ENCODE measurements at regions of chr5 and their contacts with region 1.

Region 1: DNA sequence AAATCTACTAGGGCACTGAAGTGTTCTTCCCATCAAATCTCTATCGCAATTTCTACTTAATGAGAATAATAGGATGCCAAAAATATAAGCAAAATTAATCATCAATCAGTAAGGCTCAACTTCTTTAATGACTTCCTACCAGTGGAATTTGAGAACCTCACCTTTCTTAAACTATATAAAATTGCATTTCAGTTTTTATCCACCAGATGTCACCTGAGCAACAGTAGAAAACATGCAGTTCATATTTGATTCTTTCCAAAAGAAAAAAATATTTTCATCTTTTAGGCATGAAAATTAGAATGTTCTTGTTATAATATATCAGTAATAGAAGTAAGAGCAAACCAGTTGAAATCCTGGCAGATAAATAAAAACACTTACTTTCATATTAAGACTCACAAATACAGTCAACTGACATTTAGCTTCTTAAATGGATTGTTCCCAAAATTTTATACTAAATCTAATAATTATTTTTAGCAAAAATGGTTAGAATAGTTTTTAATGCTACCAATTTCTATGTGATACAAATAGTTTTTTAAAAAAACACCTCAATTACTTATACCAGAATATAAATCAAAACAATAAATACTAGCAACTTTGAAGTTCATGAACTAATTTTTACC is 13.4 kb upstream of the CCDC112 start:
- DNase-seq: no peak
- ATAC-seq: no peak
- H3K4me3 Mint-ChIP-seq: no peak overlapping the region
- H3K27ac Mint-ChIP-seq: no peak overlapping the region
- H3K4me1 Mint-ChIP-seq: no peaks in the 10 kb centered on the region
- H3K27me3 Mint-ChIP-seq: peaks cover 24% of the 10 kb centered on the region

Region 2: GRCh38 chr5:115296124-115297022 is 13.5 kb before region 1 on chr5 and contains the start of gene CCDC112:
- CTCF ChIA-PET with region 1: interaction called, 11 read pairs
- POLR2A ChIA-PET with region 1: no interaction called
- DNase-seq: peak; percentile 76
- ATAC-seq: peak; percentile 88
- H3K4me3 Mint-ChIP-seq: peak within 1 kb of the TSS; percentile 67
- H3K27ac Mint-ChIP-seq: no peak within 1 kb of the TSS
- H3K4me1 Mint-ChIP-seq: peaks cover 5% of the 10 kb centered on the region
- H3K27me3 Mint-ChIP-seq: peaks cover 47% of the 10 kb centered on the region
- total RNA-seq, gene CCDC112: 0.50 to 0.71 TPM

Region 3: GRCh38 chr5:115575167-115576070 is 265.6 kb after region 1 on chr5:
- CTCF ChIA-PET with region 1: interaction called, 96 read pairs
- POLR2A ChIA-PET with region 1: no interaction called
- DNase-seq: no peak
- ATAC-seq: no peak
- H3K4me3 Mint-ChIP-seq: no peak overlapping the region
- H3K27ac Mint-ChIP-seq: no peak overlapping the region
- H3K4me1 Mint-ChIP-seq: no peaks in the 10 kb centered on the region
- H3K27me3 Mint-ChIP-seq: peaks cover 18% of the 10 kb centered on the region

Region 4: DNA sequence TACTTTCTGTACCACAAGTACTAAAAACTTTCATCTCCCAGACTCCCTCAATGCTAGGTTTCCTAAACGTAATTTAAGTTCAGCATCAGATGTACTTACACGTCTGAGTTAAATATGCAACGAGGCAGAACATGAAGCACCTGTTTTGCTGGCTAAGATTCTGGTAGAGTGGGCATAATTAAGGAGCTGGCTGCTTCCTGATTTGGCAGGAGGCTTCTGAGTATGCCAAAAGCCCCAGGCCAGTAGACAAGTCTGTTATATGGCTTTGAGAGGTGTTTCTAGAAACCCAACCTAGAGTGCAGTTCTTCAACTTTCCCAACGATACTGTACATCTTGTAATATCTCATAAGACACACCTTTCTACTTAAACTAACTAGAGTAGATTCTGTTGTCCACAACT is 278.8 kb after region 1 on chr5:
- CTCF ChIA-PET with region 1: interaction called, 13 read pairs
- POLR2A ChIA-PET with region 1: no interaction called
- DNase-seq: no peak
- ATAC-seq: no peak
- H3K4me3 Mint-ChIP-seq: no peak overlapping the region
- H3K27ac Mint-ChIP-seq: no peak overlapping the region
- H3K4me1 Mint-ChIP-seq: no peaks in the 10 kb centered on the region
- H3K27me3 Mint-ChIP-seq: no peaks in the 10 kb centered on the region